IMR-90 (cell line): ENCODE measurements at regions of chr4 and their contacts with region 1.

Region 1: GRCh38 chr4:140266991-140267426 is 106.4 kb upstream of the SCOC start:
- DNase-seq: peak; percentile 92
- ATAC-seq: peak; percentile 78
- H3K4me3 ChIP-seq: no peak overlapping the region
- H3K27ac ChIP-seq: no peak overlapping the region
- H3K4me1 ChIP-seq: peaks cover 15% of the 10 kb centered on the region
- H3K27me3 ChIP-seq: no peaks in the 10 kb centered on the region
- CTCF ChIP-seq: no peak
- POLR2A ChIP-seq: no peak
- RAD21 ChIP-seq: no peak

Region 2: DNA sequence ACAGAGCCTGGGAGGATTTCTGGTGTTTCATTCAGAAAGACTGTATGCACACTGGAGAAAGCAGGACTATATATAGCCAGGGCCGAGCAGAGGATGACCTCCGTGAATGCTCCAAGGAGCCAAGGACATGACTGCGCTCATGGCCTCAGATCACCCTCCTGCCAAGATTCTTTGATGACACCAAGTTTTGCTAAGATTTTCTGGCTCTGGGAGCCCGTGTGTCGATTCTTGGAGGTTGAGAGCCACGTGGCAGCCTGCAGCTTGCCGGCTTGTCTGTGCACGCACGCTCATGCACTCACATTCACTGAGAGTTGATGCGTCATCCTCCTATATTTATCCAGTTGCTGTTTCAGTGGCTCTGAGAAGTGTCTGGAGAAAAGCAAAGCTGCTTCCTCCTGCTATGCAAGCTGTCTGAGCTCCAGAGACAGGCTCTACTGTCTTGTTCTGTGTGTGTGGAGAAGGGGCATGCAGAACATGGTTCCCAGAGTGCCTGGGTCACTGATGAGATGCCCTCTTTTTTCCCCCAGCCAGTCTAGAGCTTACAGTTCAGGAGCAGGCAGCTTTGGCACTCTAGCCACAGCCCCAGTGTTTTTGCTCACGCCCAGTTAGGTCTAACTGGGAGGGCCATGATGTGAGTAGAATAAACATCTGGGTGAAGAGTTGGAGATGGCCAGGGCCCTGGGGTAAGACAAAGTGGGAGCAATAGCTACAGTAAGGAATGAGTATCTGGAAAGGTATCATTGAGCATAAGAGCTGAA is 41.5 kb after region 1 on chr4:
- CTCF ChIA-PET with region 1: no interaction called
- POLR2A ChIA-PET with region 1: no interaction called
- dilution Hi-C with region 1: no loop called
- in situ Hi-C with region 1: no loop called
- intact Hi-C with region 1: loop called (anchors 5 kb)
- DNase-seq: peak; percentile 98
- ATAC-seq: peak; percentile 79
- H3K4me3 ChIP-seq: no peak overlapping the region
- H3K27ac ChIP-seq: peak overlapping the region; percentile 72
- H3K4me1 ChIP-seq: peaks cover 13% of the 10 kb centered on the region
- H3K27me3 ChIP-seq: no peaks in the 10 kb centered on the region
- CTCF ChIP-seq: no peak
- POLR2A ChIP-seq: peak; percentile 49; the same call in 1 of the 2 replicates
- RAD21 ChIP-seq: 0 out of 2 replicates have a peak, but pooled peaks have one; percentile 8